ENCODE measurements at regions of chrX and their contacts with region 1.

Region 1: GRCh38 chrX:44244008-44244407 is 99.5 kb downstream of the EFHC2 start:
- DNase-seq: peak; percentile 10
- H3K4me3 Mint-ChIP-seq: no peak overlapping the region
- H3K27ac Mint-ChIP-seq: no peak overlapping the region
- H3K4me1 Mint-ChIP-seq: peaks cover 26% of the 10 kb centered on the region
- H3K27me3 Mint-ChIP-seq: no peaks in the 10 kb centered on the region
- CTCF ChIP-seq: peak; percentile 33

Region 2: DNA sequence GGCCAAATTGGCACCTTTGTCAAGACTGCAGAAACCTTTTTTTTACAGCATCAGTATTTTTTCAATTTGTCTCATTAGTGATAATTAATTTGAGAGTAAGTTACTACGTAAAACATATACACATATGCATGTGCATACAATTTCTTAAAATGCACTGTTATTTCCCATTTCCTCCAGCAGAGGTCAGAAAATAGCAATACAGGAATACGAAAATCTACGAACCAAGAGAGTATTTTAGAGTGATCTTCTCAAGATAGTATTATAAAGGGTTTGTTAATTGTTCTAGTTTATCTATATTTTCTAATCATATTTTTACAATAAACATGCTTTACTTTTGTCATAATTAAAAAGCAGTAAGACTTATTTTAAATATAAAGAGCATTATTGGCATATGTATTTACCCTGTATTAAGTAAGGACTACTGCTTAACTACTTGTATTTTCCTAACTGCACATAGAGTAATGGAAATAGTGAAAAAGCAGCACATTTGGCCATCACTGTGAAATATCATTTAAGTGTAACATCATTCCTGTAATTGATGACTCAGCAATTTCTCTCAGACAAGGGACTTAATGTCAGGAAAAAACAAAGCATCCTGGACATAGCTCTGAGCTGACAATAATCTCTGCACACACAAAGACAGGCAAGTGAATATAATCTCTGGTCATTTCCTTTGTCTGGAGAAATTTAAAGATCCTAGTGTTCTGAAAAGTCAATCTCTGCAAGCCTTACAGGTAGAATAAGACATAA is 407.4 kb before region 1 on chrX:
- CTCF ChIA-PET with region 1: interaction called, 4 read pairs
- intact Hi-C with region 1: loop called (anchors 10 kb)
- DNase-seq: no peak
- H3K4me3 Mint-ChIP-seq: no peak overlapping the region
- H3K27ac Mint-ChIP-seq: no peak overlapping the region
- H3K4me1 Mint-ChIP-seq: no peaks in the 10 kb centered on the region
- H3K27me3 Mint-ChIP-seq: no peaks in the 10 kb centered on the region
- CTCF ChIP-seq: peak; percentile 30

Region 3: GRCh38 chrX:44025555-44025954 is 218.5 kb before region 1 on chrX:
- CTCF ChIA-PET with region 1: interaction called, 6 read pairs
- intact Hi-C with region 1: loop called (anchors 5 kb)
- DNase-seq: no peak
- H3K4me3 Mint-ChIP-seq: no peak overlapping the region
- H3K27ac Mint-ChIP-seq: no peak overlapping the region
- H3K4me1 Mint-ChIP-seq: peaks cover 17% of the 10 kb centered on the region
- H3K27me3 Mint-ChIP-seq: no peaks in the 10 kb centered on the region
- CTCF ChIP-seq: no peak

Region 4: DNA sequence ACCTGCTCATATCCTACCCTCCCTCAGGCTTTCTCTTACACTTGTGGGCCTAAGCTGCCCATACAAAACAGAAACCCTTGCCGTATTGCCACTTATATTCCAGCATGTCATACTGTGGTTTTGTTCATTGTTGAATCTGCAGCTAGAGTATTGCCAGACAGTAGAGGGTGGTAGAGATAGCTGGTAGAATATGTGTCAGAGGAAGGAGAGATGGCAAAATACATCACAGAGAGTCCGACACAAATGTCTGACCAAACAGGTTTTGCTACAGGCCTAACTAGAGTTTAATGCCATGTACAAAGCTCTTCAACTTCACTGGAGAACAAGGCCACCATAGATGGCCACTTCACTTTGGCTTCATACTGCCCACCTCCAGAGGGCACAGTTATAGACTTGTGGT is 60.7 kb before region 1 on chrX:
- CTCF ChIA-PET with region 1: interaction called, 5 read pairs
- intact Hi-C with region 1: loop called (anchors 1 kb)
- DNase-seq: peak; percentile 21
- H3K4me3 Mint-ChIP-seq: peak overlapping the region; percentile 19
- H3K27ac Mint-ChIP-seq: peak overlapping the region; percentile 39
- H3K4me1 Mint-ChIP-seq: peaks cover 16% of the 10 kb centered on the region
- H3K27me3 Mint-ChIP-seq: no peaks in the 10 kb centered on the region
- CTCF ChIP-seq: peak; percentile 14

Region 5: DNA sequence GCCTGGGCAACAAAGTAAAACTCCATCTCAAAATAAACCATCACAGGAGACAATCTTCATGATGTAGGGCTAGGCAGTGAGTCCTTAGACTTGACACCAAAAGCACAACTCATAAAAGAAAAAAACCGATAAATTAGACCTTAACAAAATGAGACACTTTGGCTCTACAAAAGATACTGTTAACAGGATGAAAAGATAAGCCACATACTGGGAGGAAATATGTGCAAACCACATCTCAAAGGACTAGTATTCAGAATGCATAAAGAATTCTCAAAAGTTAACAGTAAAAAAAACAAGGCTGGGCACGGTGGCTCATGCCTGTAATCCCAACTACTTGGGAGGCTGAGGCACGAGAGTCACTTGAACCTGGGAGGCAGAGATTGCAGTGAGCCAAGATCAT is 86.2 kb after region 1 on chrX:
- CTCF ChIA-PET with region 1: no interaction called
- intact Hi-C with region 1: no loop called
- DNase-seq: no peak
- H3K4me3 Mint-ChIP-seq: no peak overlapping the region
- H3K27ac Mint-ChIP-seq: no peak overlapping the region
- H3K4me1 Mint-ChIP-seq: no peaks in the 10 kb centered on the region
- H3K27me3 Mint-ChIP-seq: no peaks in the 10 kb centered on the region
- CTCF ChIP-seq: no peak

Measured in Calu3 (cell line).